Heart left ventricle (tissue), 16 donors: ENCODE measurements at regions of chr18 and their contacts with region 1.

Region 1: GRCh38 chr18:48404716-48405507 is 4.3 kb downstream of the ZBTB7C start:
- DNase-seq: peak in 1 of 5 donors; percentile 32
- ATAC-seq: no peak
- H3K4me3 ChIP-seq: no peak overlapping the region
- H3K27ac ChIP-seq: no peak overlapping the region
- H3K4me1 ChIP-seq: peaks cover 0 to 26% (median 6%) of the 10 kb centered on the region in 12 donors
- H3K27me3 ChIP-seq: peaks cover 0 to 31% (median 0%) of the 10 kb centered on the region in 9 donors
- CTCF ChIP-seq: no peak
- POLR2A ChIP-seq: no peak

Region 2: GRCh38 chr18:48345596-48345995 is 59.3 kb before region 1 on chr18:
- intact Hi-C with region 1: loop called in 2 of 10 experiments (anchors 5 kb)
- DNase-seq: no peak
- ATAC-seq: peak in 2 of 4 donors; percentile 38 to 51
- H3K4me3 ChIP-seq: no peak overlapping the region
- H3K27ac ChIP-seq: no peak overlapping the region
- H3K4me1 ChIP-seq: peaks cover 0 to 13% (median 5%) of the 10 kb centered on the region in 12 donors
- H3K27me3 ChIP-seq: no peaks in the 10 kb centered on the region
- CTCF ChIP-seq: peak in 8 of 12 donors; percentile 11 to 40 (median 26)
- POLR2A ChIP-seq: no peak

Region 3: GRCh38 chr18:48428475-48429177 is 23.7 kb after region 1 on chr18:
- intact Hi-C with region 1: loop called in 1 of 10 experiments (anchors 2 kb)
- DNase-seq: peak in 2 of 5 donors; percentile 45 to 56
- ATAC-seq: peak in 3 of 4 donors; percentile 73 to 80 (median 73)
- H3K4me3 ChIP-seq: no peak overlapping the region
- H3K27ac ChIP-seq: no peak overlapping the region
- H3K4me1 ChIP-seq: no peaks in the 10 kb centered on the region
- H3K27me3 ChIP-seq: peaks cover 0 to 20% (median 0%) of the 10 kb centered on the region in 9 donors
- CTCF ChIP-seq: no peak
- POLR2A ChIP-seq: no peak

Region 4: DNA sequence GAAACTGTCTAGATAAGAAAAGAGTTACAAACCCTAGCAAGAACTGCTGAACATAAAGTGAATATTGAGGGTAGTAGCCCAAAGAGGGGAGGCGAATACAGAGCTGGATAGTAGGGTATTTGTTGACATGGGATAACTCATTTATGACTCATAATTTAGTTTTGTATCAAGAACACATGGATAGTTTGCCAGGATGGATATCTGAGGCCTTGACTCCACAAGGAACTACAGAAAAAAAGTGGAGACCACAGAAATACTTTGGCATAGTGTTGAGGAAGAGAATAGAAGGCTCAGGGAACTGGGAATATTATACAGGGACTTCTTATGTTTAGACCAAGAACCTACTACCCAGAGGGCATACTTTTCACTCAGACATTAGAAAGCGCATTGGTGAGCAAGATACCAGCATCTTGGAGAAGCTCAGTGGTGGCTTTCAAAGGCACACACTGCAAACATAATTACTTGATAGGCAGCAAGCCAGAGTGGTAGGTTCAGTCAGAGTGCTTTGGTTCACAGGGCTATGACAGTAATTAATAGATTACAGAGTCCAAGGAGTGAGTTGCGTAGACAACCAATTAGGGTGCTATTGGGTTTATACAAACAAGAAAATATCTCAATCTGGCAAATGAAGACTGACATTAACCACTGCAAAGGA is 56.1 kb after region 1 on chr18:
- intact Hi-C with region 1: no loop called
- DNase-seq: no peak
- ATAC-seq: no peak
- H3K4me3 ChIP-seq: no peak overlapping the region
- H3K27ac ChIP-seq: no peak overlapping the region
- H3K4me1 ChIP-seq: peaks cover 0 to 9% (median 0%) of the 10 kb centered on the region in 12 donors
- H3K27me3 ChIP-seq: no peaks in the 10 kb centered on the region
- CTCF ChIP-seq: no peak
- POLR2A ChIP-seq: no peak

Region 5: GRCh38 chr18:48600456-48601090 is 195.7 kb after region 1 on chr18:
- intact Hi-C with region 1: no loop called
- DNase-seq: no peak
- ATAC-seq: peak; percentile 43 to 77 (median 66)
- H3K4me3 ChIP-seq: no peak overlapping the region
- H3K27ac ChIP-seq: peak overlapping the region in 8 of 12 donors; percentile 22 to 70 (median 49)
- H3K4me1 ChIP-seq: peaks cover 0 to 48% (median 28%) of the 10 kb centered on the region in 12 donors
- H3K27me3 ChIP-seq: no peaks in the 10 kb centered on the region
- CTCF ChIP-seq: no peak
- POLR2A ChIP-seq: no peak